ENCODE measurements at regions of chr4 and their contacts with region 1.

Region 1: DNA sequence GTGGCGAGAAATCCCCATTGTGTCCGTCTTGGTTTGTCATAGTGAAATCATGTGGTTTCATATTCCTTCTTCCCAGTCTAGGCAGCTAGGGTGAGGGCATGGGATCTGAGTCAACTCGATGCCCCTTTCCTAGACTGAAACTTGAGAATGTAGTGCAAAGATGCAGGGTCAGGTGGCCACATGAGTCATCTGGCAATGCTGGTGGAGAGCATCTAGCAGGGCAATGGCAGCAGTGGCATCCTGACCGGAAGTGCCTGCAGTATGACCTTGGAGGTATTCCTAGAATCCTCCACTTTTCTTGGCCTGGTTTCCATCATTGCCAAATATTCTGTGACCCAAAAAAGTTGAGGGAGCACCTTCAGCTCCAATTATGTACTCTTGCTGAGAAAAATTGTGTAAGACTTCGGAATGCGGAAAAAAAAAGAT is 39.1 kb upstream of the TMEM184C start:
- DNase-seq: peak; percentile 98
- H3K4me3 ChIP-seq: no peak overlapping the region
- H3K27ac ChIP-seq: peak overlapping the region; percentile 74
- H3K4me1 ChIP-seq: peaks cover 17% of the 10 kb centered on the region
- H3K27me3 ChIP-seq: no peaks in the 10 kb centered on the region
- CTCF ChIP-seq: no peak
- POLR2A ChIP-seq: peak; percentile 53

Region 2: GRCh38 chr4:147334478-147334877 is 243.6 kb before region 1 on chr4:
- CTCF ChIA-PET with region 1: no interaction called
- POLR2A ChIA-PET with region 1: no interaction called
- dilution Hi-C with region 1: no loop called
- intact Hi-C with region 1: loop called (anchors 10 kb)
- DNase-seq: peak; percentile 44
- H3K4me3 ChIP-seq: no peak overlapping the region
- H3K27ac ChIP-seq: peak overlapping the region; percentile 5
- H3K4me1 ChIP-seq: peaks cover 26% of the 10 kb centered on the region
- H3K27me3 ChIP-seq: no peaks in the 10 kb centered on the region
- CTCF ChIP-seq: no peak
- POLR2A ChIP-seq: no peak

Region 3: DNA sequence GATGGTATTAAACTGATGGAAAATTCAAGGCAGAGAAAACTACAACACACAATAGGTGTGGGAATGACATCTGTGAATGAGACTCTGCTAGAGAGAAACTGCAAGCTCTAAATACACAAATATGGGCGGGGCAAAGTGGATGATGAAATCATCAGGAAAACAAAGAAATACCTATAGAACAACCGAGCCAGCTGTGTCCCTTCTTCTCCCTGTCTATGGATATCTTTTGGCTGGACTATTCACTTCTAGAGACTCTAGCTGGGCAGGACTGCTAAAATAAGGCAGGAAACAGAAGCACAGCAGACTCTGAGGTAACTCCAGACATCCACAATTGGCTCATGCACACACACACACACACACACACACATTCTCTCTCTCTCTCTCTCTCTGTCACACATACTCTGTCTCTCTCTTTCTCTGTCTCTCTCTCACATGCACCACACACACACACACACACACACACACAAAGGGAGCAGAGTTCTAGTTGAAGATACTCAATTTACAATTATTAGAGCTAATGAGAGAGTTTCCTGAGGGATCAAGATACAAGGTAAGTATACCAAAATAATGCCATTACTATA is 124.4 kb before region 1 on chr4:
- CTCF ChIA-PET with region 1: no interaction called
- POLR2A ChIA-PET with region 1: no interaction called
- dilution Hi-C with region 1: no loop called
- intact Hi-C with region 1: no loop called
- DNase-seq: no peak
- H3K4me3 ChIP-seq: no peak overlapping the region
- H3K27ac ChIP-seq: no peak overlapping the region
- H3K4me1 ChIP-seq: no peaks in the 10 kb centered on the region
- H3K27me3 ChIP-seq: no peaks in the 10 kb centered on the region
- CTCF ChIP-seq: no peak
- POLR2A ChIP-seq: no peak